ENCODE measurements at regions of chr14 and their contacts with region 1.

Region 1: DNA sequence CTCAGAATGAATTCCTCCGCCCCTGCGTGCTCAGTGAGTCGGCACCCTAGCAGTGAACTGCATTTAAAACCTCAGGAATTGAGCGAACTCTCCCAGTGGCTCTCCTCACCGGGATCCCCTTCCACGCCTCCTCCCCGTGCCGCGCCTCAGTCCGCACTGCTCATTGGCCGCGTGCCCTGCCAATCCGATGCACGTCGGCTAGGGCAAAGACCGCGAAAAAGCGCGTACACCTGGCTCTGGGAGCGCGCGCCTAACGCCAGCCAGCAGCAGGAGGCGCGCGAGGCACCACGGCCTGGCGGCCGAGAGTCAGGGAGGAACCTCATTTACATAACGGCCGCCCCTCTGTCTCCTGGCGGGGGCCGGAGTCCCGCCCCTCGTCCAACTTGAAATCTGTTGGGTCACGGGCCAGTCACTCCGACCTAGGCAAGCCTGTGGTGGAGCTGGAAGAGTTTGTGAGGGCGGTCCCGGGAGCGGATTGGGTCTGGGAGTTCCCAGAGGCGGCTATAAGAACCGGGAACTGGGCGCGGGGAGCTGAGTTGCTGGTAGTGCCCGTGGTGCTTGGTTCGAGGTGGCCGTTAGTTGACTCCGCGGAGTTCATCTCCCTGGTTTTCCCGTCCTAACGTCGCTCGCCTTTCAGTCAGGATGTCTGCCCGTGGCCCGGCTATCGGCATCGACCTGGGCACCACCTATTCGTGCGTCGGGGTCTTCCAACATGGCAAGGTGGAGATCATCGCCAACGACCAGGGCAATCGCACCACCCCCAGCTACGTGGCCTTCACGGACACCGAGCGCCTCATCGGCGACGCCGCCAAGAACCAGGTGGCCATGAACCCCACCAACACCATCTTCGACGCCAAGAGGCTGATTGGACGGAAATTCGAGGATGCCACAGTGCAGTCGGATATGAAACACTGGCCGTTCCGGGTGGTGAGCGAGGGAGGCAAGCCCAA is at the start of gene HSPA2:
- DNase-seq: peak; percentile 99
- H3K4me3 ChIP-seq: peak within 1 kb of the TSS; percentile 47 to 55
- H3K27ac ChIP-seq: peak within 1 kb of the TSS; percentile 85 to 91
- H3K4me1 ChIP-seq: no peaks in the 10 kb centered on the region
- H3K27me3 ChIP-seq: no peaks in the 10 kb centered on the region
- CTCF ChIP-seq: peak; percentile 75 to 98 (median 88)
- POLR2A ChIP-seq: peak; percentile 84
- total RNA-seq, gene HSPA2: 35.9 to 59.9 TPM

Region 2: DNA sequence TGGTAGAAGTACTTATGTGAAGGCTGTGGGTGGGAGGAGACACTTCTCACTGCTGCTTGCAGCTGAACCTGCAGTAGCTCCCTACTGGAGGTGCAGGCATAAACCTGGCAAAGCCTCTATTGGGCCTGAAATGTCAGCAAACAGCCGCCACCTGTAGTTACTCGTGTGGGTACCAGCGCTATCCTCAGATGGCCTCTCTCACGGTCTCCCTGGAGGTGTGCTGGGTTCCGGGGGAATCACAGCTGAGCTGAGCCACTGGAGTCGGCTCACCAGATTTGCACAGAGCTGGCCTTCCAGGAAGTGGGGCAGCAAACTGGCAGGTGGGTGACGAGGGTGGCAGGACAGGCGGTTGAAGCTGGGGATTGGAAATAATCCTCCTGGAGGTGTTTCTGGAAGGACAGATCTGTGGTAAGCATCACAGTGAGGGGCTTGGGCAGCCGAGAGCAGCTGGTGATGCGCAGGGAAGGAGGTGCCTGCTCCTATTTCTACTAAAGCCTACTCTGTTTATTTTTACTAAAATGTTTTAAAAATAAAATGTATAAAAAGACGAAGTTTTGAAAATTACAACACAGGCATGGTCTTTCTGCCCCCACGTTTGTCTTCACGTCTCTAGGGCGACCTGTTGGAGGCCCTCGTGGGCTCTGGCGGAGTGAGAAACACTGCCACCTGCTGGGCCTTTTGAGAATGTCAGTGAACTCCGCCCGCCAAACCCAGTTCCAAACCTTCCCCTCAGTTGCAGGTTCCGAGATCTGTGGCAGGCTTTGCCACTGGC is 95.9 kb after region 1 on chr14:
- intact Hi-C with region 1: loop called (anchors 1 kb)
- DNase-seq: peak; percentile 57
- H3K4me3 ChIP-seq: no peak overlapping the region
- H3K27ac ChIP-seq: no peak overlapping the region
- H3K4me1 ChIP-seq: no peaks in the 10 kb centered on the region
- H3K27me3 ChIP-seq: no peaks in the 10 kb centered on the region
- CTCF ChIP-seq: peak; percentile 78 to 89 (median 87)
- POLR2A ChIP-seq: no peak